Ascending aorta (tissue), 2 donors: ENCODE measurements at regions of chr3 and their contacts with region 1.

Region 1: DNA sequence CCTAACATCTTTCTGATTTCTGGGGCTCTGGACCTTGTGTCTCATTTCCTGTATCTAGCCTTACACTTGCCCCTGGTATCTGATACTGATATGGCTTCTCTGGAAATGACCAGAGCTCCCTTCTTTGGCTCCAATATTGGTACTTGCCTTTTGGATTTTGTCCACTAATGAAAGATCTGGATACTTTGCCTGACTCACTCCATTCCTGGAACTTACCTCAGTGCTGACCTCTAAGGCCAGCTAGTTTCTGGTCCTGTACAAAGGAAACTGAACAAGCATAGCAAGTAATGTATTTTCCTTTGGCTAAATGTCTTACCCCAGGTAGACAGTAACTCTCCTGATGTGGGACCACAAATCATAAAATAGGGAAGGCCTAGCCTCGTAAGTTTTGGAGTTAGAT is 93.8 kb upstream of the SLC4A7 start:
- DNase-seq: peak in 1 of 2 donors; percentile 73
- H3K4me3 ChIP-seq: no peak overlapping the region
- H3K27ac ChIP-seq: peak overlapping the region; percentile 78 to 88
- H3K4me1 ChIP-seq: peaks cover 0 to 18% of the 10 kb centered on the region in 2 donors
- H3K27me3 ChIP-seq: no peaks in the 10 kb centered on the region
- CTCF ChIP-seq: no peak

Region 2: GRCh38 chr3:27544372-27544865 is 33.6 kb before region 1 on chr3:
- intact Hi-C with region 1: loop called (anchors 5 kb)
- DNase-seq: no peak
- H3K4me3 ChIP-seq: no peak overlapping the region
- H3K27ac ChIP-seq: peak overlapping the region in 1 of 2 donors; percentile 12
- H3K4me1 ChIP-seq: peaks cover 0 to 6% of the 10 kb centered on the region in 2 donors
- H3K27me3 ChIP-seq: no peaks in the 10 kb centered on the region
- CTCF ChIP-seq: no peak

Region 3: GRCh38 chr3:27623085-27623753 is 45.2 kb after region 1 on chr3:
- intact Hi-C with region 1: loop called (anchors 5 kb)
- DNase-seq: peak in 1 of 2 donors; percentile 81
- H3K4me3 ChIP-seq: no peak overlapping the region
- H3K27ac ChIP-seq: peak overlapping the region; percentile 88 to 90
- H3K4me1 ChIP-seq: peaks cover 3 to 19% of the 10 kb centered on the region in 2 donors
- H3K27me3 ChIP-seq: no peaks in the 10 kb centered on the region
- CTCF ChIP-seq: no peak

Region 4: GRCh38 chr3:27639271-27639670 is 61.2 kb after region 1 on chr3:
- intact Hi-C with region 1: loop called (anchors 5 kb)
- DNase-seq: no peak
- H3K4me3 ChIP-seq: no peak overlapping the region
- H3K27ac ChIP-seq: peak overlapping the region in 1 of 2 donors; percentile 83
- H3K4me1 ChIP-seq: peaks cover 4 to 18% of the 10 kb centered on the region in 2 donors
- H3K27me3 ChIP-seq: no peaks in the 10 kb centered on the region
- CTCF ChIP-seq: no peak

Region 5: GRCh38 chr3:28210968-28211713 is 633.1 kb after region 1 on chr3:
- intact Hi-C with region 1: no loop called
- DNase-seq: no peak
- H3K4me3 ChIP-seq: no peak overlapping the region
- H3K27ac ChIP-seq: no peak overlapping the region
- H3K4me1 ChIP-seq: no peaks in the 10 kb centered on the region
- H3K27me3 ChIP-seq: no peaks in the 10 kb centered on the region
- CTCF ChIP-seq: no peak